GM18951 (cell line): ENCODE measurements at regions of chr6 and their contacts with region 1.

Region 1: GRCh38 chr6:127464881-127465459 is 5.8 kb upstream of the KIAA0408 start:
- POLR2A ChIP-seq: no peak

Region 2: GRCh38 chr6:127085181-127085580 is 379.8 kb before region 1 on chr6:
- in situ Hi-C with region 1: no loop called
- POLR2A ChIP-seq: no peak

Region 3: DNA sequence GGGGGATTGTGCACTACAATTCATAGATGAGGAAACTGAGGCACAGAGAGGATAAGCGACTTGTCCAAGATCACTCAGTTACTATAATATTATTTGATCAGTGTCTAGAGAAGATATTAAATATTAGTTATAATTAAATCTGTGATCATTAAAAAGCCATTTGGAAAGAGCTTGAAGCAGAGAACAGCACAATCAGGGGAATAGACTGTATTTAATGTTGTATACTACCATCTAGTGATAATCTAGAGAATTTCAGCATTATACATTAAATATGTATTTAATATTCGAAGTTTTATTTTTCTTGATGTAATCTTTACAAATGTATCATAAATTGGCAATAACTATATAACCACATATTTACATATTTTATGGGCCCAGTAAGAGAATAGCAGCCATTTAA is 74.3 kb after region 1 on chr6:
- in situ Hi-C with region 1: loop called (anchors 10 kb)
- POLR2A ChIP-seq: no peak